ENCODE measurements at regions of chr14 and their contacts with region 1.

Region 1: GRCh38 chr14:100383727-100384158 is 60.6 kb downstream of the SLC25A47 start:
- DNase-seq: peak; percentile 70
- H3K4me3 Mint-ChIP-seq: no peak overlapping the region
- H3K27ac Mint-ChIP-seq: no peak overlapping the region
- H3K4me1 Mint-ChIP-seq: peaks cover 12% of the 10 kb centered on the region
- H3K27me3 Mint-ChIP-seq: no peaks in the 10 kb centered on the region
- CTCF ChIP-seq: peak; percentile 85

Region 2: GRCh38 chr14:100359881-100360280 is 23.9 kb before region 1 on chr14:
- CTCF ChIA-PET with region 1: no interaction called
- intact Hi-C with region 1: no loop called
- DNase-seq: no peak
- H3K4me3 Mint-ChIP-seq: no peak overlapping the region
- H3K27ac Mint-ChIP-seq: no peak overlapping the region
- H3K4me1 Mint-ChIP-seq: no peaks in the 10 kb centered on the region
- H3K27me3 Mint-ChIP-seq: no peaks in the 10 kb centered on the region
- CTCF ChIP-seq: no peak

Region 3: GRCh38 chr14:100440187-100440631 is 56.5 kb after region 1 on chr14:
- CTCF ChIA-PET with region 1: interaction called, 16 read pairs
- intact Hi-C with region 1: no loop called
- DNase-seq: peak; percentile 82
- H3K4me3 Mint-ChIP-seq: no peak overlapping the region
- H3K27ac Mint-ChIP-seq: no peak overlapping the region
- H3K4me1 Mint-ChIP-seq: peaks cover 41% of the 10 kb centered on the region
- H3K27me3 Mint-ChIP-seq: no peaks in the 10 kb centered on the region
- CTCF ChIP-seq: peak; percentile 60

Region 4: GRCh38 chr14:100645192-100645990 is 261.6 kb after region 1 on chr14:
- CTCF ChIA-PET with region 1: interaction called, 32 read pairs
- intact Hi-C with region 1: loop called (anchors 2 kb)
- DNase-seq: peak; percentile 91
- H3K4me3 Mint-ChIP-seq: no peak overlapping the region
- H3K27ac Mint-ChIP-seq: no peak overlapping the region
- H3K4me1 Mint-ChIP-seq: peaks cover 26% of the 10 kb centered on the region
- H3K27me3 Mint-ChIP-seq: peaks cover 33% of the 10 kb centered on the region
- CTCF ChIP-seq: peak; percentile 78

Region 5: GRCh38 chr14:101288436-101289229 is 904.9 kb after region 1 on chr14:
- CTCF ChIA-PET with region 1: no interaction called
- intact Hi-C with region 1: no loop called
- DNase-seq: no peak
- H3K4me3 Mint-ChIP-seq: no peak overlapping the region
- H3K27ac Mint-ChIP-seq: no peak overlapping the region
- H3K4me1 Mint-ChIP-seq: no peaks in the 10 kb centered on the region
- H3K27me3 Mint-ChIP-seq: peaks cover 93% of the 10 kb centered on the region
- CTCF ChIP-seq: no peak

Region 6: DNA sequence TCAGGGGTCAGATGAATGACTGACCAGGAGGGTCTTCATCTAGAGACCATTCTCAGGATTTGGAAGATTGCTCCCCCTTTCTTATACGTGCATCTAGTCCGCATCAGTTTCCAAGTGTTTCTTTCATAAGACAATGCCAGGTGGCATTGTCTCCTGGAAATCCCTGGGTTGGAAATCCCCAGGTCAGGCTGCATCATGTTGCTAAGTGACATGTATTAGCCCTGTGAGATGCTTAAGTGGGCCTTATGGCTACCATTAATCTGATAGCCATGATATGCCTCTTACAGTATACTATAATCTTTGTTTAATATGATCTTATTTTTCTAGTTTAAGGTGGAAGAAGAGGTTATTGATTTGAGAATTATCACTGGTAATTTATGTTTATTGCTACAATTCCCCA is 1270.3 kb after region 1 on chr14:
- CTCF ChIA-PET with region 1: no interaction called
- intact Hi-C with region 1: no loop called
- DNase-seq: no peak
- H3K4me3 Mint-ChIP-seq: no peak overlapping the region
- H3K27ac Mint-ChIP-seq: no peak overlapping the region
- H3K4me1 Mint-ChIP-seq: no peaks in the 10 kb centered on the region
- H3K27me3 Mint-ChIP-seq: peaks cover 47% of the 10 kb centered on the region
- CTCF ChIP-seq: no peak

Region 7: DNA sequence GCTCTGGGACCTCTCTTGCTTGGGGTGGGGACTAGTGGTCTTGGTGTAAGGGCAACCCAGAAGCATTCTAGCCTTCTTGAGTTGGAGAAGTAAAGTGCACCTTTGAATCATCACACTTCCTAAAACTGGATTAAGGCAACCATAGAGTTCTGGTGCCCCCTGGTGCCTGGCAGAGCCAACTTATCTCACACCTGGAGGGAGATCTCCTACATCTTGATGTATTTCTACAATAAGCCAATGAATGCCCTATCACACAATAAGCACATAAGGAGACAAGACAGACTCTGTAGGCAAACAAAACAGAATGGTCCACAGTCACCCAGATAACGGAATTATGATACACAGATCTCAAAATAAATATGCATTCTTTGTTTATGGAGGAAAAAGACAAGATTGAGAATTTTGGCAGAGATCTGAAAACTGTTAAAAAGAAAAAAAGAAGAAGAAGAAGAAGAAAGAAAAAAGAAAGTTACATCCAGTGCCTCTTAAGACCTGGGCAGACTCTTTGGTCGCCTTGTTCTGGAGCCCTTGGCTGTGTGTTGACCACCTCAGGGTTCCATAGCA is 1281.9 kb after region 1 on chr14:
- CTCF ChIA-PET with region 1: interaction called, 4 read pairs
- intact Hi-C with region 1: loop called (anchors 2 kb)
- DNase-seq: peak; percentile 79
- H3K4me3 Mint-ChIP-seq: no peak overlapping the region
- H3K27ac Mint-ChIP-seq: no peak overlapping the region
- H3K4me1 Mint-ChIP-seq: peaks cover 8% of the 10 kb centered on the region
- H3K27me3 Mint-ChIP-seq: peaks cover 30% of the 10 kb centered on the region
- CTCF ChIP-seq: peak; percentile 33